ENCODE measurements at regions of chr7 and their contacts with region 1.

Region 1: GRCh38 chr7:22082886-22083703 is 137.4 kb upstream of the CDCA7L start:
- DNase-seq: peak; percentile 97
- H3K4me3 ChIP-seq: peak overlapping the region; percentile 60 to 78
- H3K27ac ChIP-seq: peak overlapping the region; percentile 51 to 56; a peak in 2 of 4 replicates
- H3K4me1 ChIP-seq: peaks cover 0 to 12% of the 10 kb centered on the region in 2 experiments; a peak in 2 of 4 replicates
- H3K27me3 ChIP-seq: peaks cover 9% of the 10 kb centered on the region; the same call in 1 of the 2 replicates
- CTCF ChIP-seq: peak; percentile 98
- EP300 ChIP-seq: no peak; a peak in 1 of 4 replicates
- RAD21 ChIP-seq: peak; percentile 81

Region 2: GRCh38 chr7:22001345-22002004 is 81.6 kb before region 1 on chr7:
- CTCF ChIA-PET with region 1: interaction called, 16 read pairs
- POLR2A ChIA-PET with region 1: no interaction called
- DNase-seq: peak; percentile 66
- H3K4me3 ChIP-seq: no peak overlapping the region; a peak in 1 of 4 replicates
- H3K27ac ChIP-seq: no peak overlapping the region
- H3K4me1 ChIP-seq: no peaks in the 10 kb centered on the region
- H3K27me3 ChIP-seq: peaks cover 24% of the 10 kb centered on the region
- CTCF ChIP-seq: peak; percentile 97
- EP300 ChIP-seq: no peak
- RAD21 ChIP-seq: peak; percentile 92

Region 3: DNA sequence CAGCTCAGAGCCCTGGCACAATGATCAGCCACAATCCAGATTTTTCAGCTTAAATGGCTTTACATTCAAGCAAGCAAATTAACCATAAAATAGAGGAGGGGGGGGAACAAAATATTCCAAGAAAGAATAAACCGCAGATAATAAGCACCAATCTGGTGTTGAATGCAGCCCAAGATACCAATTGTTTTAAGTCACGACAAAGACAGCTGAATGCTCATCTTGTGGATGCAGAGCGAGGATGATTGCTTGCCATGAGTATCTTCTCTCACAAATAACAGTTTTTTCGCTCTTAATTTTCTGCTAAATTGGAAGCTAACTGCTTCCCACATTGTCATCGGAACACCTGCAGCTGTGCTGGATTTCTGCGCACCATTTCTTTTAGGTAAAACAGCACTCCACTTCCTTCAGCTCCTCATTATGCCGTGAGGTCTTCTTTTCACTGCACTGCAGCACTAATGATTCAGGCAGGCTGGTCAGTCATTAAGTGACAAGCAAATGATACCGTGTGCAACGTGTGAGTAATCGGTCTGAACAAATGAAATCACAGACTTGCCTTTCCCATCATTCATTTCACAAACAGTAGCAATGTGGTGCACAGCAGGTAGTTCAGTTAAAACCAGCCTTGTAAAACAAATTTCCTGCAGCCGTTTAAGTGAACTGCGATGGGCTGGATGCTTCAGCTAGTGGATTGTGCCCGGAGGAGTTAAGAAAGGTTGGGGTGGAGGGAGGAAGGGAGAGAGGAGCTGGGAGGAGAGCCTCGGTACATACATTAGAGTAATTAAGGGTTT is 31.0 kb before region 1 on chr7:
- CTCF ChIA-PET with region 1: interaction called, 11 read pairs
- POLR2A ChIA-PET with region 1: no interaction called
- DNase-seq: no peak
- H3K4me3 ChIP-seq: no peak overlapping the region
- H3K27ac ChIP-seq: no peak overlapping the region
- H3K4me1 ChIP-seq: no peaks in the 10 kb centered on the region
- H3K27me3 ChIP-seq: peaks cover 58% of the 10 kb centered on the region
- CTCF ChIP-seq: no peak
- EP300 ChIP-seq: no peak
- RAD21 ChIP-seq: no peak

Region 4: GRCh38 chr7:22066484-22066883 is 16.6 kb before region 1 on chr7:
- CTCF ChIA-PET with region 1: interaction called, 53 read pairs
- POLR2A ChIA-PET with region 1: no interaction called
- DNase-seq: no peak
- H3K4me3 ChIP-seq: no peak overlapping the region
- H3K27ac ChIP-seq: no peak overlapping the region
- H3K4me1 ChIP-seq: no peaks in the 10 kb centered on the region
- H3K27me3 ChIP-seq: peaks cover 28% of the 10 kb centered on the region; the same call in 1 of the 2 replicates
- CTCF ChIP-seq: no peak
- EP300 ChIP-seq: no peak
- RAD21 ChIP-seq: no peak

Region 5: GRCh38 chr7:22094413-22095342 is 11.6 kb after region 1 on chr7:
- CTCF ChIA-PET with region 1: interaction called, 104 read pairs
- POLR2A ChIA-PET with region 1: interaction called, 3 read pairs
- DNase-seq: no peak
- H3K4me3 ChIP-seq: no peak overlapping the region
- H3K27ac ChIP-seq: no peak overlapping the region
- H3K4me1 ChIP-seq: no peaks in the 10 kb centered on the region
- H3K27me3 ChIP-seq: peaks cover 9% of the 10 kb centered on the region; the same call in 1 of the 2 replicates
- CTCF ChIP-seq: peak; percentile 28; the same call in 1 of the 2 replicates
- EP300 ChIP-seq: no peak
- RAD21 ChIP-seq: no peak

Region 6: GRCh38 chr7:22103255-22103969 is 20.3 kb after region 1 on chr7:
- CTCF ChIA-PET with region 1: interaction called, 104 read pairs
- POLR2A ChIA-PET with region 1: no interaction called
- DNase-seq: peak; percentile 75
- H3K4me3 ChIP-seq: peak overlapping the region in 1 of 2 experiments; percentile 15; a peak in 1 of 4 replicates
- H3K27ac ChIP-seq: no peak overlapping the region
- H3K4me1 ChIP-seq: peaks cover 0 to 2% of the 10 kb centered on the region in 2 experiments; a peak in 1 of 4 replicates
- H3K27me3 ChIP-seq: peaks cover 21% of the 10 kb centered on the region; the same call in 1 of the 2 replicates
- CTCF ChIP-seq: peak; percentile 99
- EP300 ChIP-seq: no peak
- RAD21 ChIP-seq: peak; percentile 88

Region 7: GRCh38 chr7:22214000-22214399 is 130.9 kb after region 1 on chr7:
- CTCF ChIA-PET with region 1: no interaction called
- POLR2A ChIA-PET with region 1: no interaction called
- DNase-seq: no peak
- H3K4me3 ChIP-seq: no peak overlapping the region
- H3K27ac ChIP-seq: no peak overlapping the region
- H3K4me1 ChIP-seq: peaks cover 0 to 17% of the 10 kb centered on the region in 2 experiments; a peak in 1 of 4 replicates
- H3K27me3 ChIP-seq: no peaks in the 10 kb centered on the region
- CTCF ChIP-seq: no peak
- EP300 ChIP-seq: no peak
- RAD21 ChIP-seq: no peak